ENCODE measurements at regions of chr2 and their contacts with region 1.

Region 1: DNA sequence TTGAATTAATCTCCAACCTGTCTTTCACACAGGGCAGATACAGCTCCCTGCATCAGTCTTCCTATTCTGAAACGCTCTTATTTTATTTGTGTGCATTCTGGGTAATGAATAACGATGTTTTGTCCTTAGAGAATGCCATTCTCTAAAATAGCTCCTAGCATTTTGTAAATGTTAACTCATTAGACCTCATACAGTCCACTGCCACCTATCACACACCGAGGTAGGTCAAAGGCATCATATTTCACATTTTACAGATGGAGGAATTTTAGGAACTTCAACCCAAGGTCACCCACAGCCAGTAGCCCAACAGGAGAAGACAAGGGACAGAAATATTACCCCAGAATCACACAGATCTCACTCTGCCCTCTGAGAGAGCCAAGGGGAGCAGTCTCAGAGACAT is 455.4 kb upstream of the GYPC start:
- DNase-seq: no peak
- ATAC-seq: no peak

Region 2: GRCh38 chr2:124874219-124874618 is 1326.3 kb before region 1 on chr2:
- intact Hi-C with region 1: loop called (anchors 5 kb)
- DNase-seq: no peak
- ATAC-seq: no peak

Region 3: DNA sequence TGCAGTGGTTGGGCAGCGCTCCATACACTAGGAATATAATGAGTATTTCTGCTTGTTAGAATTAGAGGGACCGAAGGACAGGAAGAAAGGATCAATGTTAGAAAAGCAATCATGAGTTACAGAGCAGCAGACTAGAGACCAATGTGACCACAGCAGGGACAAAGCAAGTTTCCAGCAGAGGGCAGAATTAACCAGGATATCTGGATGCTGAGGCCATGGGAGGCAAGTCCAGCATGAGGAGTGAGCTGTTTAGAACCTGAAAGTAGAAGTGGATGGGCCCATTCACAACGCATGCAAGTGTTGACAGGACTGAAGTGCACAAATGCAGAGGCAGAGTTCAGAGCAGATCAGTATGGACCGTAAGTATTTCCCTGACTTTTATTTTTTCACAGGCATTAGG is 455.0 kb before region 1 on chr2:
- intact Hi-C with region 1: no loop called
- DNase-seq: no peak
- ATAC-seq: peak; percentile 45

Region 4: GRCh38 chr2:126886211-126886915 is 685.8 kb after region 1 on chr2:
- intact Hi-C with region 1: no loop called
- DNase-seq: peak; percentile 85
- ATAC-seq: peak; percentile 91